ENCODE measurements at regions of chr3 and their contacts with region 1.

Region 1: GRCh38 chr3:129249276-129250065 is at the start of gene COPG1:
- DNase-seq: peak; percentile 53 to 93
- H3K4me3 ChIP-seq: peak within 1 kb of the TSS; percentile 78 to 93
- H3K27ac ChIP-seq: peak within 1 kb of the TSS; percentile 88 to 89
- H3K4me1 ChIP-seq: peaks cover 7 to 33% of the 10 kb centered on the region in 2 donors
- H3K27me3 ChIP-seq: no peaks in the 10 kb centered on the region
- CTCF ChIP-seq: no peak
- total RNA-seq, gene COPG1: 224 TPM

Region 2: GRCh38 chr3:128969993-128970739 is 279.3 kb before region 1 on chr3:
- intact Hi-C with region 1: loop called (anchors 1 kb)
- DNase-seq: no peak
- H3K4me3 ChIP-seq: no peak overlapping the region
- H3K27ac ChIP-seq: no peak overlapping the region
- H3K4me1 ChIP-seq: peaks cover 0 to 3% of the 10 kb centered on the region in 2 donors
- H3K27me3 ChIP-seq: no peaks in the 10 kb centered on the region
- CTCF ChIP-seq: peak; percentile 90 to 97 (median 95)

Region 3: GRCh38 chr3:129120254-129121004 is 129.0 kb before region 1 on chr3:
- intact Hi-C with region 1: loop called (anchors 2 kb)
- DNase-seq: peak; percentile 74 to 96
- H3K4me3 ChIP-seq: peak overlapping the region; percentile 98 to 100
- H3K27ac ChIP-seq: peak overlapping the region; percentile 97 to 99
- H3K4me1 ChIP-seq: peaks cover 9 to 18% of the 10 kb centered on the region in 2 donors
- H3K27me3 ChIP-seq: no peaks in the 10 kb centered on the region
- CTCF ChIP-seq: peak; percentile 23 to 37 (median 29)

Region 4: DNA sequence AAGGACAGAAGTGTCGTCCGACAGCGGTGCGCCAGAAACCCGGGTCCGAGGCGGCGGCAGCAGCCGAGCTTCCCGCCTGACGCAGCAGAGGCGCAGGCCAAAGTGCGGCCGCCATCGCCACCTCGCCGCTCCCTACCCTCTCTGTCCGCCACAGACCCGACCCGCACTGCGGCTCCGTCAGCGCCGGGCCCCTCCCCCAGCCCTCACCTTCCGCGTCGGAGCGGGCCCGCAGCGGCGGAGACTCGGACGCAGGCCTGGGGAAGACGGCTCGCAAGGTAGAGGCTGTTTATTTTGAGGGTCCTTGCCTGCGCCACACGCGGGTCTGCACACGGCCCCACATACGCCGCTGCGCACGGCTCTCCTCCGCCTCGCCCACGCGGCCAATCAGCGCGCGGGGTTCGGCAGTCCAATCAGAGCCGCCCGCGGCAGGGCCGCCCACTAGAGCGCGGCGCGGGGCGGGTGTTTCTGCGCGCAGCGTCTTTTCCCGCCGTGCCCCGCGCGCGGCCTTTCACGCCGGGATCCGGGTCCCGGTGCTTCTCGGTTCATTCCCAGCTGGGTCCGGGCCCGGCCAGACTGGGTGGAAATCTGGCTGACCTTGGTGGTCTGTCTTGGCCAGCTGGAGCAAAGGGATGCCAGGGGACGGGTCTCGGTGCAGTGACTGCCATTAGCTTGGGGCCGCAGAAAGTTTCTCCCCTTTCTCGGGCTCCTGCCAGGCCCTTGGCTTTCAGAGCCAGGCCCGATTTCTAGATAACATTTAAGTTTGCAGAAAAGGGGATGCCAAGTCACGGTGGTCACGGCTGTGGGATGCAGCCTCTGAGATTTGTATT is 65.7 kb before region 1 on chr3 and contains the start of gene CNBP:
- intact Hi-C with region 1: loop called (anchors 1 kb)
- DNase-seq: peak; percentile 66 to 96
- H3K4me3 ChIP-seq: peak within 1 kb of the TSS; percentile 95 to 96
- H3K27ac ChIP-seq: peak within 1 kb of the TSS; percentile 99 to 100
- H3K4me1 ChIP-seq: peaks cover 7 to 27% of the 10 kb centered on the region in 2 donors
- H3K27me3 ChIP-seq: no peaks in the 10 kb centered on the region
- CTCF ChIP-seq: no peak
- total RNA-seq, gene CNBP: 166 TPM

Region 5: DNA sequence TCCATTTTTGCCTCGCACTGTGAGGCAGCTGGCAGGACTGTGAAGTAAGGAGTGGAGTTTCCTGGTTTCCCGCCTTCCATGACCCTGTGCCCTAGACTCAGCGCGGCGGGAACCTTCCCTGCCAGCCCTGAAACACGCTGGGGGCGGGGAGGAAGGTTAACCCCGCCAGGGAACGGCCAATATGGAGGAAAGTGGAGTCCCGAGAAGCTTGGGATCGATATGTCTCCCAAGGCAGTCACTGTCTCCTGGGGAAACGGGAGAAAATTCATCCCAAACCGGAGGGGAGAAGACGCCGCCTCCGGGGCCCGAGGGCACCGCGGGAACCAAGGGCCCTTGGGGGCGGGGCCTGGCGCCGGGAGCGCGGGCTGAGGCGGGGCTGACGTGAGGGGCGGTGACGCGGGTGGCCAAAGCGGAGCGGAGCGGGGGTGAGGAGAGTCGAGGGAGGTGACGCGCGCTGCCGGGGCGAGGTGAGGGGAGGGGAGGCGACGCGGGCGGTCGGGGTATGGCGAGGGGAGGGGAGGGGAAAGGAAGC is 29.0 kb after region 1 on chr3 and contains the start of gene HMCES:
- intact Hi-C with region 1: loop called (anchors 1 kb)
- DNase-seq: peak; percentile 61 to 94
- H3K4me3 ChIP-seq: peak within 1 kb of the TSS; percentile 60 to 93
- H3K27ac ChIP-seq: peak within 1 kb of the TSS; percentile 95 to 98
- H3K4me1 ChIP-seq: peaks cover 0 to 14% of the 10 kb centered on the region in 2 donors
- H3K27me3 ChIP-seq: no peaks in the 10 kb centered on the region
- CTCF ChIP-seq: peak in 1 of 3 experiments; percentile 22
- total RNA-seq, gene HMCES: 11.2 TPM